Activated CD4-positive, alpha-beta T cell treated with anti-CD3 and anti-CD28 coated beads, Interleukin-2, amount 10 ng/mL, durations not matched to agents 7 days and 5 days (primary cell): ENCODE measurements at regions of chr5 and their contacts with region 1.

Region 1: DNA sequence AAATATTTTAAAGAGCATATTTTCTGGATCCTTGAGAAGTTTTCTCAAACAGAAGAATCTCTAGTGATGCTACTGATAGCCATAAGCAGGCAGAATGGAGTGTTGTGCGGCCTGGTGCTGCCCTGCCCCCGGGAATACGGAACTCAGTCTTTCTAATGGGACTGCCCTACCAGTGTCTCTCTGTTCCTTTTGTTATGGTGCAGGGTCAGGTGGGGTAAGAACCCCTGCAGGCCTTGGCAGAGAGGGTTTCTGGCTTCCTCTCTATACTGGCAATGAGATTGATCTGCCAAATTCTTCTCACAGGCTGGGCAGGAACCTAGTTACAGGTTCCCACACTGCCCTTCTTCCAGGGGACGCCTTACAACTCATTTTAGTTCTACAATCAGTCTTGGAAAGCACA is 2.6 kb downstream of the IL5 start:
- DNase-seq: no peak
- H3K4me3 Mint-ChIP-seq: no peak overlapping the region
- H3K27ac Mint-ChIP-seq: no peak overlapping the region
- H3K4me1 Mint-ChIP-seq: peaks cover 9% of the 10 kb centered on the region
- H3K27me3 Mint-ChIP-seq: peaks cover 9% of the 10 kb centered on the region

Region 2: GRCh38 chr5:132526290-132526973 is 14.3 kb before region 1 on chr5:
- CTCF ChIA-PET with region 1: interaction called, 14 read pairs
- POLR2A ChIA-PET with region 1: no interaction called
- DNase-seq: peak; percentile 55
- H3K4me3 Mint-ChIP-seq: no peak overlapping the region
- H3K27ac Mint-ChIP-seq: no peak overlapping the region
- H3K4me1 Mint-ChIP-seq: peaks cover 35% of the 10 kb centered on the region
- H3K27me3 Mint-ChIP-seq: peaks cover 11% of the 10 kb centered on the region